Activated CD4-positive, alpha-beta T cell treated with anti-CD3 and anti-CD28 coated beads, Interleukin-2, amount 10 ng/mL, durations not matched to agents 24 days and 14 days (primary cell): ENCODE measurements at regions of chr14 and their contacts with region 1.

Region 1: DNA sequence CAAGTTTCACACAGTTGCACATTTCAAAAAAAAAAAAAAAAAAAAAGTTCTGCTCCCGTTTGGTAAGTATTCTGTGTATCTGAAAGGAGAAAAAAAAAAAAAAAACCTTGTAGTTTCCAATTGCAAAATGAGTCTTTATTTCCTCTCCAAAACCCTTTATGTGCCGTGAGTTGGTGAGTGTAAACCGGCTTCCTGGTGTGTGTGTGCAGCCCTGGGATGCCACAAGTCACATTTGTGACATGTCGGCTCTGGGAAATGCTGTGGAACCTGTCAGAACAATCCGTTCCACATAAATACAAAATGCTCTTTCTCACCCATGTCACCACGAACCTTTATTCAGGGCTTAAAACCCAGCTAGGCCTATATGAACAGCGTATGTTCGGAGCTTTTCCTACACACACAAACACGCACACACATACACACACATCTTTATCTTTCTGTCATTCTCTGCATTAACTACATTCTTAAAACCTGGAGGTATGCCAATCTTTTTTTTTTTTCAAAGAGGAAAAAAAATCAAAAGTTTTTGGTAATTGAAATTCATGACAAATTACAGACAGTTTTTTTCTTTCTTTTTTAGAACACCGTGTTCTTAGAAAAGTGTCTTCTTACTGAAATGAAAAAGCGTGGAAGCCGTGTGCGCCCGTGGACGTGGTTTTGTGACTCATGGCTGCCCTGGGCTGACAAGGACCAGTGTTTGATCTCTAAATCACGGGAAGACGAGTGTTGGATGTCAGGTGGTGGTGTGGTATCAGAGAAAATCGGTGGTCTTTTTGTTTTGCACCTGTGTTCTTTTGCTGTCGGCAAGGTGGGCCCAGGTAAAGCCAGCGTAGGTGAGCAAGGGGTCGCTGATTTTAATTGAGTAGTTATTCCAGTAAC is 612.0 kb downstream of the VRK1 start:
- DNase-seq: peak; percentile 82
- H3K4me3 Mint-ChIP-seq: peak overlapping the region; percentile 64
- H3K27ac Mint-ChIP-seq: peak overlapping the region; percentile 86
- H3K4me1 Mint-ChIP-seq: peaks cover 31% of the 10 kb centered on the region
- H3K27me3 Mint-ChIP-seq: peaks cover 5% of the 10 kb centered on the region

Region 2: GRCh38 chr14:97306760-97307246 is 102.4 kb before region 1 on chr14:
- intact Hi-C with region 1: loop called (anchors 1 kb)
- DNase-seq: peak; percentile 65
- H3K4me3 Mint-ChIP-seq: peak overlapping the region; percentile 20
- H3K27ac Mint-ChIP-seq: peak overlapping the region; percentile 86
- H3K4me1 Mint-ChIP-seq: peaks cover 28% of the 10 kb centered on the region
- H3K27me3 Mint-ChIP-seq: no peaks in the 10 kb centered on the region

Region 3: GRCh38 chr14:97380539-97380941 is 28.6 kb before region 1 on chr14:
- intact Hi-C with region 1: loop called (anchors 1 kb)
- DNase-seq: peak; percentile 74
- H3K4me3 Mint-ChIP-seq: peak overlapping the region; percentile 33
- H3K27ac Mint-ChIP-seq: peak overlapping the region; percentile 78
- H3K4me1 Mint-ChIP-seq: peaks cover 43% of the 10 kb centered on the region
- H3K27me3 Mint-ChIP-seq: no peaks in the 10 kb centered on the region

Region 4: DNA sequence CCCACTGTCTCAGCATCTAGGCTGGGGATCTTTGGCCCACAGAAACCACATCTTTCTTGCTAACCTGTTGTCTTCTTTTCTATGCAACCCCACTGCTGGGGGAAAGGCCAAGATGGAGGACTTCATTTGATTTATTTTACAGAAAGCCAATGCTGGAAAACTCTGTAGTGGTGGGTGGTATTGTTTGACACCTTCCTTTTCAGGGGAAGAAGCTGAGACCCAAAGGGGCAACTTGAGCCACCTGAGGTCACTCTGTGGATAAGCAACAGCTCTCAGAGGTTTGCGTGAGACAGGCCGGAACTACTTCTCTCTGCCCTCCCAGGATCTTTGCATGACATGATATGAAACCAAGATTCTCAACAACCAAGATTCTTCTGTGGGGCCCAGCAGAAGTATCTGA is 33.2 kb after region 1 on chr14:
- intact Hi-C with region 1: loop called (anchors 1 kb)
- DNase-seq: peak; percentile 78
- H3K4me3 Mint-ChIP-seq: peak overlapping the region; percentile 40
- H3K27ac Mint-ChIP-seq: peak overlapping the region; percentile 92
- H3K4me1 Mint-ChIP-seq: peaks cover 26% of the 10 kb centered on the region
- H3K27me3 Mint-ChIP-seq: no peaks in the 10 kb centered on the region

Region 5: GRCh38 chr14:97468220-97468619 is 59.0 kb after region 1 on chr14:
- intact Hi-C with region 1: no loop called
- DNase-seq: no peak
- H3K4me3 Mint-ChIP-seq: no peak overlapping the region
- H3K27ac Mint-ChIP-seq: no peak overlapping the region
- H3K4me1 Mint-ChIP-seq: peaks cover 2% of the 10 kb centered on the region
- H3K27me3 Mint-ChIP-seq: no peaks in the 10 kb centered on the region

Region 6: GRCh38 chr14:97602438-97603117 is 193.4 kb after region 1 on chr14:
- intact Hi-C with region 1: loop called (anchors 5 kb)
- DNase-seq: peak; percentile 90
- H3K4me3 Mint-ChIP-seq: no peak overlapping the region
- H3K27ac Mint-ChIP-seq: no peak overlapping the region
- H3K4me1 Mint-ChIP-seq: peaks cover 31% of the 10 kb centered on the region
- H3K27me3 Mint-ChIP-seq: no peaks in the 10 kb centered on the region

Region 7: DNA sequence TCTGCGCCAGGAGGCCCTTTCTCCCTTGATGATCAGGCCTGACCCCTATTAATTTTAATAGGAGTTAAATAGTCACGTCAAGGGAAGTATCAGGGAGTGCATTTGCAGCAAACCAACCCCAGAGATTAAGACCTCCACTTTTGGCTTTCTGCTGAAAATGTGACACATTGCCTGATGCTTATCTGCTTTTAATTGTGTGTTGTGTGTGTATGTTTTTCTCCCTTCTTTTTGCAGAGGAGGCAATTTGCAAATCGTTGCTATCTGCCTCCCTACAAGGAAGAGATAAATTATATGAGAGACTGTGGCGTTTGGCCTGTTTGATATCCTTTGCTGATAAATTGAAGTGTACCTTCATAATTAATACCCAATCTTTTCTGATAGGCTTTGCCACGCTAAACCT is 210.9 kb after region 1 on chr14:
- intact Hi-C with region 1: loop called (anchors 5 kb)
- DNase-seq: no peak
- H3K4me3 Mint-ChIP-seq: peak overlapping the region; percentile 71
- H3K27ac Mint-ChIP-seq: peak overlapping the region; percentile 63
- H3K4me1 Mint-ChIP-seq: peaks cover 33% of the 10 kb centered on the region
- H3K27me3 Mint-ChIP-seq: no peaks in the 10 kb centered on the region

Region 8: GRCh38 chr14:97713023-97713422 is 303.8 kb after region 1 on chr14:
- intact Hi-C with region 1: loop called (anchors 2 kb)
- DNase-seq: peak; percentile 55
- H3K4me3 Mint-ChIP-seq: no peak overlapping the region
- H3K27ac Mint-ChIP-seq: no peak overlapping the region
- H3K4me1 Mint-ChIP-seq: peaks cover 32% of the 10 kb centered on the region
- H3K27me3 Mint-ChIP-seq: no peaks in the 10 kb centered on the region